Mammary epithelial cell (primary cell): ENCODE measurements at regions of chr19 and their contacts with region 1.

Region 1: DNA sequence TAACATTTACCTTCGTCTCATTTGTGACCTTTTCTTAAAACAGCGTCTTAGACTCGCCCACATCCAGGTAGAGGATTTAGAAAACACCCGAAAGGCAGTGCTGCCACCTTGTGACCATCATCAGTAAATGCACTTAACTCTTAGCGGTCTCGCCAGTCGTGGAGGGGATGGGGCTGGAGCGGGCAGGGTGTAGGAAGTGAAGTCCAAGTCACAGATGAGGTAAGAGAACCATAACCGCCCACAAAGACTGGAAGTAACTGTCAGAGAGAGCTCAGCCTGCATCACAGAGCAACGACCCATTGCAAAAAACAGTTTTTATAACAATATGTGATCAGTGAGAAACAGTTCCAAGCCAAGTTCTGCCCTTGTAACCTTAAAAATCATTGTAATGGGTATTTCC is 10.7 kb upstream of the CEACAM3 start:
- DNase-seq: peak; percentile 44
- H3K4me3 ChIP-seq: no peak overlapping the region
- H3K27ac ChIP-seq: no peak overlapping the region
- H3K4me1 ChIP-seq: no peaks in the 10 kb centered on the region
- H3K27me3 ChIP-seq: peaks cover 13% of the 10 kb centered on the region
- CTCF ChIP-seq: peak; percentile 84 to 86

Region 2: GRCh38 chr19:41641879-41642485 is 143.7 kb before region 1 on chr19:
- CTCF ChIA-PET with region 1: no interaction called
- dilution Hi-C with region 1: no loop called
- in situ Hi-C with region 1: no loop called
- intact Hi-C with region 1: loop called (anchors 5 kb)
- DNase-seq: peak; percentile 30
- H3K4me3 ChIP-seq: no peak overlapping the region
- H3K27ac ChIP-seq: no peak overlapping the region
- H3K4me1 ChIP-seq: no peaks in the 10 kb centered on the region
- H3K27me3 ChIP-seq: no peaks in the 10 kb centered on the region
- CTCF ChIP-seq: peak; percentile 90 to 91

Region 3: DNA sequence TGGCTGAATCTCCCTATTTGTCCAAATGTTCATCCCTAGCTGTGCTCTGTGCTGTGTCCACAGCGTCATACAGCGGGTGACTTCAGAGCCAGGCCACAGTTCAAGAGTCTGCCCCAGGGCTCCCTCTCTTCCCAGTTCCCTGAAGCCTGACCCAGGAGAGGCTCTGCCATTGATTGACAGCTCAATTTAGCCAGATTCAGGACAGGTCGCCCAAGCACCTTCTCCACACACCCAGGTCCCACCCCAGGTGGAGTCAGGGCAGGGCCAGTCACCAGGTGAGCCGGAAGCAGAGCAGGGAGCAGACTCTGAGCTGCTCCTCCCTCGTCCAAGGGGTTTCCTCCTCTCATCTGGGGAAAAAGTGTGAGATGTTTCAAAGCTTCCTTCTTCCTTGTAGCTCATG is 103.3 kb before region 1 on chr19:
- CTCF ChIA-PET with region 1: no interaction called
- dilution Hi-C with region 1: loop called (anchors 5 kb)
- in situ Hi-C with region 1: no loop called
- intact Hi-C with region 1: no loop called
- DNase-seq: no peak
- H3K4me3 ChIP-seq: no peak overlapping the region
- H3K27ac ChIP-seq: no peak overlapping the region
- H3K4me1 ChIP-seq: no peaks in the 10 kb centered on the region
- H3K27me3 ChIP-seq: no peaks in the 10 kb centered on the region
- CTCF ChIP-seq: no peak

Region 4: DNA sequence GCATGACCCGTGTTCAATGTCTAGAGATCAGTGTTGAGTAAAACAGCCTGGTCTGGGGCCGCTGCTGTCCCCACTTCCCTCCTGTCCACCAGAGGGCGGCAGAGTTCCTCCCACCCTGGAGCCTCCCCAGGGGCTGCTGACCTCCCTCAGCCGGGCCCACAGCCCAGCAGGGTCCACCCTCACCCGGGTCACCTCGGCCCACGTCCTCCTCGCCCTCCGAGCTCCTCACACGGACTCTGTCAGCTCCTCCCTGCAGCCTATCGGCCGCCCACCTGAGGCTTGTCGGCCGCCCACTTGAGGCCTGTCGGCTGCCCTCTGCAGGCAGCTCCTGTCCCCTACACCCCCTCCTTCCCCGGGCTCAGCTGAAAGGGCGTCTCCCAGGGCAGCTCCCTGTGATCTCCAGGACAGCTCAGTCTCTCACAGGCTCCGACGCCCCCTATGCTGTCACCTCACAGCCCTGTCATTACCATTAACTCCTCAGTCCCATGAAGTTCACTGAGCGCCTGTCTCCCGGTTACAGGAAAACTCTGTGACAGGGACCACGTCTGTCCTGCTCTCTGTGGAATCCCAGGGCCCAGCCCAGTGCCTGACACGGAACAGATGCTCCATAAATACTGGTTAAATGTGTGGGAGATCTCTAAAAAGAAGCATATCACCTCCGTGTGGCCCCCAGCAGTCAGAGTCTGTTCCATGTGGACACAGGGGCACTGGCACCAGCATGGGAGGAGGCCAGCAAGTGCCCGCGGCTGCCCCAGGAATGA is 78.7 kb before region 1 on chr19:
- CTCF ChIA-PET with region 1: no interaction called
- dilution Hi-C with region 1: no loop called
- in situ Hi-C with region 1: no loop called
- intact Hi-C with region 1: loop called (anchors 2 kb)
- DNase-seq: peak; percentile 51
- H3K4me3 ChIP-seq: peak overlapping the region in 2 of 3 experiments; percentile 23 to 33
- H3K27ac ChIP-seq: no peak overlapping the region
- H3K4me1 ChIP-seq: peaks cover 4% of the 10 kb centered on the region
- H3K27me3 ChIP-seq: no peaks in the 10 kb centered on the region
- CTCF ChIP-seq: peak; percentile 71 to 78

Region 5: GRCh38 chr19:41746593-41747227 is 38.9 kb before region 1 on chr19:
- CTCF ChIA-PET with region 1: interaction called, 4 read pairs
- dilution Hi-C with region 1: no loop called
- in situ Hi-C with region 1: loop called (anchors 5 kb)
- intact Hi-C with region 1: no loop called
- DNase-seq: peak; percentile 26
- H3K4me3 ChIP-seq: no peak overlapping the region
- H3K27ac ChIP-seq: no peak overlapping the region
- H3K4me1 ChIP-seq: no peaks in the 10 kb centered on the region
- H3K27me3 ChIP-seq: peaks cover 4% of the 10 kb centered on the region
- CTCF ChIP-seq: peak; percentile 45 to 75

Region 6: DNA sequence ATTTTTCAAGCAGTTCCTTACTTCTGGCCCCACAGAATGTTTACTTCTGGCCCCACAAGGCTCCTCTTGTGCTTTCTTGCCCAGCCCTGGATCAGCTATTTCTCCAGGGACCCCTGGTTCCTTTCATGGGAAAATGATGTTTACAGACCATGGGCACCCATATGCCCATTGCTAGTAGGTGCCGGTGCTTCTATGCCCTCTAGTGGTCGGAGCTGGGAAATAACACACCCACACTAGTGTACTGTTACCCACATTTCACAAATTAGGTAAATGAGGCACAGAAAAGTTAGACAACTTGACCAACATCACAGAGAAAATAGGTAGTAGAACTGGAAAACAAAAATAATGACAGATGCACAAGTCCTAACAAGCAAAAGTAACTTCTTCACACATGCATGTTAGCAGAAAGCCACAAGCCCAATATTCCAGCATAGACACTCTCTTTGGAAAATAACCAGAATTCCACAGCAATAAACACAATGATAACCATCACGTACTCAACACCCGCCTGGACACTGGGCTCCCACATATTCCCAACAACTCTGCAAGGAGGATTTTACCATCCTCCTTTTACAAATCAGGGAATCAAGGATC is 31.6 kb before region 1 on chr19:
- CTCF ChIA-PET with region 1: interaction called, 9 read pairs
- dilution Hi-C with region 1: no loop called
- in situ Hi-C with region 1: loop called (anchors 5 kb)
- intact Hi-C with region 1: loop called (anchors 1 kb)
- DNase-seq: peak; percentile 19
- H3K4me3 ChIP-seq: no peak overlapping the region
- H3K27ac ChIP-seq: no peak overlapping the region
- H3K4me1 ChIP-seq: no peaks in the 10 kb centered on the region
- H3K27me3 ChIP-seq: no peaks in the 10 kb centered on the region
- CTCF ChIP-seq: peak; percentile 78 to 79

Region 7: DNA sequence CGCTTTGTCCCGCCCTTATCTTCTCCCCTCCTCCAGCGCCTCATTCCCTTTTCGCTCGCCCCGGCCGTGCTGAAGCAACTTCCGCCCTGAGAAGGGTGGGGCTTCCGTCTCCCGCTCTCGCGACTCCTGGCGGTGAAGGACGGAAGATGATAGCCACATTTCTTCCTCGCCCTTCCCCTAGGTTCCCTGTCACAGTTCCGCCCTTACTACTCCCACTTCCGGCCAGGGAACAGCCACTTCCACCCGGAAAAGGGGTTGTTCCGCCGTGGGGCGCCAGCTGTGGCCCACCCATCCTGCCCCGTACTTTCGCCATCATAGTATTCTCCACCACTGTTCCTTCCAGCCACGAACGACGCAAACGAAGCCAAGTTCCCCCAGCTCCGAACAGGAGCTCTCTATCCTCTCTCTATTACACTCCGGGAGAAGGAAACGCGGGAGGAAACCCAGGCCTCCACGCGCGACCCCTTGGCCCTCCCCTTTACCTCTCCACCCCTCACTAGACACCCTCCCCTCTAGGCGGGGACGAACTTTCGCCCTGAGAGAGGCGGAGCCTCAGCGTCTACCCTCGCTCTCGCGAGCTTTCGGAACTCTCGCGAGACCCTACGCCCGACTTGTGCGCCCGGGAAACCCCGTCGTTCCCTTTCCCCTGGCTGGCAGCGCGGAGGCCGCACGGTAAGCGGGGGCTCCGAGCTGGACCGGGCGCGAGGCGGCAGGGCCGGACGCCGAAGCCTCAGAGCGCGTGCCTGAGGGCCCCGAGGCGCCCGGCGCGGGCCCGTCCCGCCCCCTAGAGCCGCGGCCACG is 74.2 kb after region 1 on chr19 and contains the start of gene RPS19:
- CTCF ChIA-PET with region 1: no interaction called
- dilution Hi-C with region 1: loop called (anchors 5 kb)
- in situ Hi-C with region 1: no loop called
- intact Hi-C with region 1: no loop called
- DNase-seq: peak; percentile 99
- H3K4me3 ChIP-seq: peak within 1 kb of the TSS; percentile 77 to 92 (median 84)
- H3K27ac ChIP-seq: peak within 1 kb of the TSS; percentile 93
- H3K4me1 ChIP-seq: peaks cover 30% of the 10 kb centered on the region
- H3K27me3 ChIP-seq: no peaks in the 10 kb centered on the region
- CTCF ChIP-seq: peak; percentile 43 to 62
- total RNA-seq, gene RPS19: 530 to 2,153 TPM